ENCODE measurements at regions of chr17 and their contacts with region 1.

Region 1: DNA sequence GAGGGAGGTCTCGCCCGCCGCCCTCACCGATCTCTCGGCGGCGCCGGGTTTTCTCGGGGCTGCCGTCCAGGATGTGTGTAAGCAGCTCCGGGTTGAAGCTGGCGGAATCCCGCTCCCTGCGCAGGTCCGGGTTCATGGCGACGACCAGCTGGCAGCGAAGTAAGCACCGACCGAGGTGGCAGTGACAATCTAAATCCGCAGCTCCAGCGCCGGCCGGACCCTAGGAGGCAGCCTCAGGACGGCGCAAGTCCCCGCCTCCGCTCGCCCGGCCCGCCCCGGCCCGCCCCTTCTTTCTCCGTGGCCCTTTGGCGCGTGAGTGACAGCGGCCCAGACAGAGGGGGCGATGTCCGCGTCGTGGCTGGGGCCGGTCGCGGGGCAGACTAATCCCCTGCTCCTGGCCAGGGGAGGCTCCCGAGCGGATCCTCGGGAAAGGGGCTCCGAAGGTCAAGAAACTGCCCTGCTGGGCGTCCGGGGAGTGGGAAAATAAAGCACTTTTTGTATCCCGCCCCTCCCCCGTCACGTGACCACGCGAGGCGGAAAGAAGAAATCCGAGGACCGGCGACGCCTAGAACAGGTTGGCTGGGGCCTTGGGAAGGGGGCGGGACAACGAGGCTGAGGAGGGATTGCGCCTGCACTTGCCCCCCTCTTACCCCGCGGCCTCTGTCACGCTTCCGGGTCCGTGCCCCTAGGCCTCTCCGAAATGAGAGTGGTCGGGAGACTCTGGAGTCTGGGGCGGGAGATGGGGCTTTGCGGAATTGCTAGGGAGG is at the starts of genes ACOX1 and TEN1:
- DNase-seq: peak; percentile 99
- H3K4me3 ChIP-seq: peak within 1 kb of the TSS; percentile 79
- H3K27ac ChIP-seq: peak within 1 kb of the TSS; percentile 69
- H3K4me1 ChIP-seq: peaks cover 52% of the 10 kb centered on the region
- CTCF ChIP-seq: peak; percentile 66
- total RNA-seq, gene ACOX1: 12.3 and 22.6 TPM in 2 replicates
- total RNA-seq, gene TEN1: 17.6 and 22.5 TPM in 2 replicates

Region 2: GRCh38 chr17:75877752-75878173 is 101.4 kb before region 1 on chr17:
- CTCF ChIA-PET with region 1: no interaction called
- POLR2A ChIA-PET with region 1: no interaction called
- intact Hi-C with region 1: loop called (anchors 1 kb)
- DNase-seq: peak; percentile 91
- H3K4me3 ChIP-seq: peak overlapping the region; percentile 71
- H3K27ac ChIP-seq: peak overlapping the region; percentile 82
- H3K4me1 ChIP-seq: peaks cover 35% of the 10 kb centered on the region
- CTCF ChIP-seq: peak; percentile 73

Region 3: DNA sequence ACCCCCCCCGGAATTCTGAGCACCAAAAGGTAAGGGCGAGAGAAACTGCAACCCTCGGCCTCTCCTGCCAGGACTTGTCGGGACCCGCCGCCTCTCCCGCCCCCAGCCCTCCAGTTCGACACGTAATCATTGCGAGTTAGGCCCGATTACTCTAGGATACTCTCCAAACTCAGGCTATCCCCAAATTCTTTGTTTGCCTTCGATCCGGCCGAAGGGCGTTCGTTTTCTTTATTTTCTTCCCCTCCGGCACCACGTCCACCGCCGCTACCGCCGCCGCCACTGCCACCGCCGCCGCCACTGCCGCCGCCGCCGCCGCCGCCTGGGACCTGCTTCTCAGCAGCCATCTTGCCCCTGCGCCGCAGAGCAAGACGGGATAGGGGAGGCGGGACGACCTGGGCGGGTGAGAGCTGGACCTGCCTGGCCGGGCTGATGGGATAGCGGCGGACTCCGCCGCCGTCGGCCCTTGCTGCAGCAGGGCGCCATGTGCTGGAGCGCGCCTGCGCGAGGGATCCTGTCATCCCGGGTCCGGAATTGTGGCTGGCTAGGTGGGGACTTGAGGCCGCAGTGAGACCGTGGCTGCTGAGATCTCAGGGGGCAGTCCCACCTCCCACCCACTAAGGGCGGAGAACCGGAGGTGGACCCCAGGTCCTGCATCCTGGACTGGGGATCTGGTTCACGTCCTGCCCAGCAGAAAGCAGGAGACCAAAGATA is 93.2 kb after region 1 on chr17 and contains the start of gene SRP68:
- CTCF ChIA-PET with region 1: no interaction called
- POLR2A ChIA-PET with region 1: no interaction called
- intact Hi-C with region 1: loop called (anchors 1 kb)
- DNase-seq: peak; percentile 90
- H3K4me3 ChIP-seq: peak within 1 kb of the TSS; percentile 78
- H3K27ac ChIP-seq: peak within 1 kb of the TSS; percentile 72
- H3K4me1 ChIP-seq: peaks cover 20% of the 10 kb centered on the region
- CTCF ChIP-seq: no peak
- total RNA-seq, gene SRP68: 53.5 and 54.0 TPM in 2 replicates

Region 4: DNA sequence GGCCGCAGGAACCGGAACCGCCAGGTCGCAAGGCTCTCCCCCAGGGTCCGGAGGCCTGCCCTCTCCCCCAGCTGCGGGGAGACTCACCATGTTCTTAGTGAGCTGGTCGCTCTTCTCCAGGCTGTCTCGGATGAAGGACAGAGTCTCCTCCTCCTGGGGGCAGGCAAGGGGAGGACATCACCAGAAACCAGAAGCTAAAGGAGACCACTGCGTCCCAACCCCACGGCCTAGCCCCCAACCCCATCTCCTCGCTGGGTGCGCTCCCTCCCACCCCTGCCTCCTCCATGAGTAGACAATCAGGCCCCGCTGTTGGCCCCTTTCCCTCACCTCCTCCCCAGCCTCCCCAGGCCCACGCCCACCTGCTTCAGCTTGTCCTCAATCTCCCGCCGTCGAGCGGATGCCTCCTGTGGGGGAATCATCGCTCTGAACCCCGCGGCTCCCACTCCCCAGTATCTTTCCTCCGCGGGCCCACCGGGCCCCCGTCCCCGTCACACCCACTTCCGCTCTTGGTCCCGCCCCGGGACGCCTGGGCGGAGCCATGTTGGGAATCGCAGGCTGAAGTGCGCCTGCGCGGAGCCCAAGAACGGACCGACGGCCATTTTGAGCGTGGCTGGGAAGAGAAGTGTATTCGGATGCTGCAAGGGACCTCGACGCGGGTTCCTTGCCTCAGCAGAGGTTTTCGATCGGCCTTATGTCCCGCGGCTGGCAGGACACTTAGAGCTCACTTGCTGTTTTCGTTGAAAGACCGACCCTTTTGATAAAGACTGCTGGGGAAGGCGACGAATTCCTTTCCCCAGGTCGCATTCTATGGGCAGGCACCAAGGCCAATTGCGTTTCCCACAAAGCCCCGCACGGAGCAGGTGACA is 124.4 kb after region 1 on chr17 and contains the start of gene EXOC7:
- CTCF ChIA-PET with region 1: interaction called, 10 read pairs
- POLR2A ChIA-PET with region 1: interaction called, 6 read pairs
- intact Hi-C with region 1: no loop called
- DNase-seq: peak; percentile 99
- H3K4me3 ChIP-seq: peak within 1 kb of the TSS; percentile 79
- H3K27ac ChIP-seq: peak within 1 kb of the TSS; percentile 32
- H3K4me1 ChIP-seq: peaks cover 29% of the 10 kb centered on the region
- CTCF ChIP-seq: no peak
- total RNA-seq, gene EXOC7: 118 and 122 TPM in 2 replicates

Measured in OCI-LY7 (cell line).